ENCODE measurements at regions of chr10 and their contacts with region 1.

Region 1: DNA sequence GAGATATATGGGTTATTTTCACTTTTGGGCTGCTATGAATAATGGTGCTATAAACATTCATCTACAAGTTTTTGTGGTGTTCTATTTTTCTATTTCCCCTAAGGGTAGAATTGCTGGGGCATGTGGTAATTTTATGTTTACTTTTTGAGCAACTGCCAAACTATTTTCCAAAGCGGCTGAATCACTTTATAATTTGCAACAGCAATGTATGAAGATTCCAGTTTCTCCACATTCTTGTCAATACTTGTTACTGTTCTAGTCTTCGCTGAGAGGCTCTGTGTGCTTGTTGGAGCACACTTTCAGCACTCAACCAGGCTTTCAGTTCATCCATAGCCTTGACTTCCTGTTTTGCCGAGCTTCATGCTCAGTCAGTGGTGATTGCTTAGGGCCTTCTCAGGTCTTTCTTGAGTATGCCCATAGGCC is 39.0 kb downstream of the ADK start:
- DNase-seq: peak; percentile 98
- H3K4me3 ChIP-seq: peak overlapping the region; percentile 35 to 51 (median 46)
- H3K27ac ChIP-seq: peak overlapping the region; percentile 85
- H3K4me1 ChIP-seq: peaks cover 49% of the 10 kb centered on the region
- H3K27me3 ChIP-seq: no peaks in the 10 kb centered on the region
- CTCF ChIP-seq: no peak

Region 2: GRCh38 chr10:74151056-74151878 is 38.7 kb before region 1 on chr10 and contains the start of gene ADK:
- CTCF ChIA-PET with region 1: no interaction called
- dilution Hi-C with region 1: no loop called
- in situ Hi-C with region 1: no loop called
- intact Hi-C with region 1: loop called (anchors 1 kb)
- DNase-seq: peak; percentile 95
- H3K4me3 ChIP-seq: peak within 1 kb of the TSS; percentile 81 to 90 (median 82)
- H3K27ac ChIP-seq: peak within 1 kb of the TSS; percentile 97
- H3K4me1 ChIP-seq: peaks cover 25% of the 10 kb centered on the region
- H3K27me3 ChIP-seq: no peaks in the 10 kb centered on the region
- CTCF ChIP-seq: peak in 1 of 2 donors; percentile 40
- total RNA-seq, gene ADK: 87.9 to 120 TPM

Region 3: GRCh38 chr10:74176380-74177139 is 13.4 kb before region 1 on chr10:
- CTCF ChIA-PET with region 1: no interaction called
- dilution Hi-C with region 1: no loop called
- in situ Hi-C with region 1: no loop called
- intact Hi-C with region 1: loop called (anchors 1 kb)
- DNase-seq: peak; percentile 99
- H3K4me3 ChIP-seq: peak overlapping the region; percentile 73 to 77 (median 77)
- H3K27ac ChIP-seq: peak overlapping the region; percentile 99
- H3K4me1 ChIP-seq: peaks cover 20% of the 10 kb centered on the region
- H3K27me3 ChIP-seq: no peaks in the 10 kb centered on the region
- CTCF ChIP-seq: no peak

Region 4: DNA sequence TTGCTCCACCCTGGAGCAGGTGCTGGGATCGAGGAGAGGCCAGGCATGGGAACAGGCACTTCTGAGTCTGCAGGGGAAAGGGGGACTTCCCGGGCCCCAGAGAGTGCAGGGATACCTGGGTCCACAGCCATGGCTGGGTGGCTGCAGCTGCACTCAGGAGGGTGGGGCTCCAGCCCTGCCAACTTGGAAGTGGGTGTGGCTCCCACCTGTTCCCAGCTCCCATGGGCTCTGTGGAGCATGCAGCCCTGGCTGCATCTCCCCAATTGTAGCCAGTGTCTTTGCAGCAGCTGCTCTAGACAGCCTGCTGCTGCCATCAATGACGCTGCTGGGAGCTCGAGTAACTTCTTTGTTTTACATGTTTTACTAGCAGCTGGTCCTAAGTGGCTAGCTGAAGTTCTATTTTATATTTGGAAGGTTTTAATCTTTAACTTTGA is 18.1 kb after region 1 on chr10:
- CTCF ChIA-PET with region 1: no interaction called
- dilution Hi-C with region 1: no loop called
- in situ Hi-C with region 1: no loop called
- intact Hi-C with region 1: loop called (anchors 2 kb)
- DNase-seq: no peak
- H3K4me3 ChIP-seq: no peak overlapping the region
- H3K27ac ChIP-seq: no peak overlapping the region
- H3K4me1 ChIP-seq: peaks cover 28% of the 10 kb centered on the region
- H3K27me3 ChIP-seq: no peaks in the 10 kb centered on the region
- CTCF ChIP-seq: no peak

Region 5: DNA sequence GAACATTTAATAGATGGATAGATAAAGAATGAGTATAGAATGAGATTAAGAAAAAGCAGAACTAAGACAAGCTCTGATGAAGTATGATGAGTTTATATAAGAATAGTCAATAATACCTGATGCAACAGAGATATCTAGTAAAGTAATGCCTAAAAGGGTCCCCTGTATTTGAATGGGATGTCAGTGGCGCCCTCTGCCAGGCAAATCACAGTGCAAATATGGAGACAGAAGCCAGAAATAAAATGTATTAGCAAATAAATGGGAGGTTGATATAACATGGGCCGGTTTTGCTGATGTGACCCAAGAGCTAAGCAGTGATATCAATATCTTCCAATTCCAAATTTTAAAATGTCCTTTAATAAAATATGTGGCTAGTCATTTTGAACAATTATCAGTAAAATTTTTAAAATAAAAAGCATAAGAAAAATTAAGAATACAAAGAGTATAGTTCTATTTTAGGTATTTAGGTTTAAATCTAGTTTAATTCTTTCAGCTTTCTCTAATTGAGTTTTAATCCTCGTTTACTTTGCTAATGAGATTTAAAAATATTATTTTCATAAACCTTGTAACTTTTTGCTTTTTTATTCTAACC is 23.7 kb after region 1 on chr10:
- CTCF ChIA-PET with region 1: no interaction called
- dilution Hi-C with region 1: no loop called
- in situ Hi-C with region 1: no loop called
- intact Hi-C with region 1: loop called (anchors 2 kb)
- DNase-seq: no peak
- H3K4me3 ChIP-seq: no peak overlapping the region
- H3K27ac ChIP-seq: no peak overlapping the region
- H3K4me1 ChIP-seq: peaks cover 6% of the 10 kb centered on the region
- H3K27me3 ChIP-seq: no peaks in the 10 kb centered on the region
- CTCF ChIP-seq: peak; percentile 46 to 63

Measured in mammary epithelial cell (primary cell).